HCT116 (cell line): ENCODE measurements at regions of chr22 and their contacts with region 1.

Region 1: GRCh38 chr22:24525416-24526037 is 29.4 kb downstream of the GUCD1 start:
- DNase-seq: peak; percentile 54
- ATAC-seq: peak; percentile 71
- H3K4me3 ChIP-seq: no peak overlapping the region
- H3K27ac ChIP-seq: no peak overlapping the region
- H3K4me1 ChIP-seq: peaks cover 11 to 14% of the 10 kb centered on the region in 2 experiments
- H3K27me3 ChIP-seq: no peaks in the 10 kb centered on the region
- CTCF ChIP-seq: peak; percentile 58 to 94 (median 85); a peak in 5 of 6 replicates
- POLR2A ChIP-seq: no peak
- RAD21 ChIP-seq: peak; percentile 78

Region 2: DNA sequence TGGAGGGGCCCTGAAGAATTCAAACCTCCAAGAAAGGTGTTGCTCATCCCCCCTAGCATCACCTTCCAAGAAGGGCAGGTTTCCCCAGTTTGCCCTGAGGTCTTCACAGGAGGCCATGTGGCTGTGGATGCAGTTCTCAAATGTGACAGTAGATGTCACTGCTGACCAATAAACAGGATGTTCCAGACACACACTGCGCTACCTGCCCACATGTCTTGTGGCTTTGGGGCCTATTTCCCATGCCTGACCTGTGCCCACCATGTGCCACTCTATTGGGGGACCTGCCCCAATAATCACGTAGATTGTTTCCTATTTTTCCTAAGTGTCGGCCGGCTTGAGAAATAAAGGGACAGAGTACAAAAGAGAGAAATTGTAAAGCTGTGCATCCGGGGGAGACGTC is 541.1 kb before region 1 on chr22:
- CTCF ChIA-PET with region 1: no interaction called
- POLR2A ChIA-PET with region 1: no interaction called
- RAD21 ChIA-PET with region 1: no interaction called
- intact Hi-C with region 1: loop called (anchors 10 kb)
- DNase-seq: peak; percentile 48
- ATAC-seq: peak; percentile 66
- H3K4me3 ChIP-seq: no peak overlapping the region
- H3K27ac ChIP-seq: no peak overlapping the region
- H3K4me1 ChIP-seq: no peaks in the 10 kb centered on the region
- H3K27me3 ChIP-seq: no peaks in the 10 kb centered on the region
- CTCF ChIP-seq: peak; percentile 75 to 81 (median 76)
- POLR2A ChIP-seq: no peak
- RAD21 ChIP-seq: peak; percentile 89

Region 3: GRCh38 chr22:24189249-24190158 is 336.0 kb before region 1 on chr22:
- CTCF ChIA-PET with region 1: interaction called, 8 read pairs
- POLR2A ChIA-PET with region 1: no interaction called
- RAD21 ChIA-PET with region 1: no interaction called
- intact Hi-C with region 1: loop called (anchors 10 kb)
- DNase-seq: no peak
- ATAC-seq: peak; percentile 93
- H3K4me3 ChIP-seq: no peak overlapping the region
- H3K27ac ChIP-seq: peak overlapping the region; percentile 74
- H3K4me1 ChIP-seq: peaks cover 35 to 36% of the 10 kb centered on the region in 2 experiments
- H3K27me3 ChIP-seq: no peaks in the 10 kb centered on the region
- CTCF ChIP-seq: peak; percentile 90 to 96 (median 94)
- POLR2A ChIP-seq: no peak
- RAD21 ChIP-seq: peak; percentile 100

Region 4: DNA sequence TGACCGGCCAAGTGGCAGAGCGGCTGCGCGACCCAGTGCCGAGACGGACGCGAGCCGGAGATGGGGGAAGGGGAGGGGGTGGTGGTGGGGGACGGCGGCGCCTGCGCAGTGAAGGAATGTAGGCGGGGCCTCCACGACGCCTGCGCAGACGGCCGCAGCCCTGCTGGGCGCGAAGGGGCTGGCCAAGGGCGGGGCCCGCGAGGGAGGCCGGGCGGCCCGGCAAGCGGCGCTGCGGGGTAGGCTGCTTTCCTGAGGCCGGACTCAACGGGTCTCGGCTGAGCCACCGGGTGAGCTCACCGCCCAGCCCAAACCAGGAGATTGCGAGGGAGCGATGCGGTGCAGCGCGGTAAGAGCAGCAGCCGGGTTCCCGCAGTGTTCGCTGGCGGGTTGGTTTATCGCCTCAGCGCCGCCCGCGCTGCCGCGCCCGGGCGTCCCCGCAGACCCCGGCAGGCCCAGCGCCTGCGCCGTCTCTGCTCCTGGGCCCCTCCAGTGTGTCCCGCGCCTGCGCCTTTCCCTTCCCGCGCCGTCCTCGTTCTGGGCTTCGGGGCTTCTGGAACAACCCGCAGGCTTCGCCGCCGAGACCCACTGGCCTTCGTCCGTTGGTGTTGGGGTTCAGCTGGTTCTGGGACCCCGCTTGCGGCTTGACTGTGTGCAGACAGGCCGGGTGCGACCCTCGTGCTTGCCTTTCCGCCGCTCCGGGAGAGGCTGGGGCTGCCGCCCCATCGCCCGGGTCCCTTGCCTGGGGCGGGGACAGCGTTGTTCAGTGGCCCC is 254.7 kb before region 1 on chr22 and contains the start of gene SPECC1L:
- CTCF ChIA-PET with region 1: no interaction called
- POLR2A ChIA-PET with region 1: no interaction called
- RAD21 ChIA-PET with region 1: no interaction called
- intact Hi-C with region 1: loop called (anchors 5 kb)
- DNase-seq: peak; percentile 84
- ATAC-seq: peak; percentile 92
- H3K4me3 ChIP-seq: peak within 1 kb of the TSS; percentile 93 to 97
- H3K27ac ChIP-seq: peak within 1 kb of the TSS; percentile 87
- H3K4me1 ChIP-seq: peaks cover 19 to 31% of the 10 kb centered on the region in 2 experiments
- H3K27me3 ChIP-seq: no peaks in the 10 kb centered on the region
- CTCF ChIP-seq: no peak
- POLR2A ChIP-seq: peak; percentile 96
- RAD21 ChIP-seq: no peak
- total RNA-seq, gene SPECC1L: 40.8 TPM

Region 5: GRCh38 chr22:24325105-24325757 is 200.3 kb before region 1 on chr22:
- CTCF ChIA-PET with region 1: interaction called, 5 read pairs
- POLR2A ChIA-PET with region 1: no interaction called
- RAD21 ChIA-PET with region 1: no interaction called
- intact Hi-C with region 1: loop called (anchors 1 kb)
- DNase-seq: no peak
- ATAC-seq: peak; percentile 65
- H3K4me3 ChIP-seq: no peak overlapping the region
- H3K27ac ChIP-seq: no peak overlapping the region
- H3K4me1 ChIP-seq: no peaks in the 10 kb centered on the region
- H3K27me3 ChIP-seq: no peaks in the 10 kb centered on the region
- CTCF ChIP-seq: peak; percentile 43 to 58 (median 44); a peak in 5 of 6 replicates
- POLR2A ChIP-seq: no peak
- RAD21 ChIP-seq: peak; percentile 60

Region 6: GRCh38 chr22:24423519-24424000 is 102.0 kb before region 1 on chr22:
- CTCF ChIA-PET with region 1: interaction called, 30 read pairs
- POLR2A ChIA-PET with region 1: no interaction called
- RAD21 ChIA-PET with region 1: no interaction called
- intact Hi-C with region 1: loop called (anchors 2 kb)
- DNase-seq: no peak
- ATAC-seq: peak; percentile 85
- H3K4me3 ChIP-seq: peak overlapping the region; percentile 40 to 59
- H3K27ac ChIP-seq: no peak overlapping the region
- H3K4me1 ChIP-seq: peaks cover 0 to 4% of the 10 kb centered on the region in 2 experiments; a peak in 2 of 4 replicates
- H3K27me3 ChIP-seq: no peaks in the 10 kb centered on the region
- CTCF ChIP-seq: peak; percentile 30 to 71 (median 62); a peak in 5 of 6 replicates
- POLR2A ChIP-seq: no peak
- RAD21 ChIP-seq: no peak; the same call in none of the 2 replicates

Region 7: DNA sequence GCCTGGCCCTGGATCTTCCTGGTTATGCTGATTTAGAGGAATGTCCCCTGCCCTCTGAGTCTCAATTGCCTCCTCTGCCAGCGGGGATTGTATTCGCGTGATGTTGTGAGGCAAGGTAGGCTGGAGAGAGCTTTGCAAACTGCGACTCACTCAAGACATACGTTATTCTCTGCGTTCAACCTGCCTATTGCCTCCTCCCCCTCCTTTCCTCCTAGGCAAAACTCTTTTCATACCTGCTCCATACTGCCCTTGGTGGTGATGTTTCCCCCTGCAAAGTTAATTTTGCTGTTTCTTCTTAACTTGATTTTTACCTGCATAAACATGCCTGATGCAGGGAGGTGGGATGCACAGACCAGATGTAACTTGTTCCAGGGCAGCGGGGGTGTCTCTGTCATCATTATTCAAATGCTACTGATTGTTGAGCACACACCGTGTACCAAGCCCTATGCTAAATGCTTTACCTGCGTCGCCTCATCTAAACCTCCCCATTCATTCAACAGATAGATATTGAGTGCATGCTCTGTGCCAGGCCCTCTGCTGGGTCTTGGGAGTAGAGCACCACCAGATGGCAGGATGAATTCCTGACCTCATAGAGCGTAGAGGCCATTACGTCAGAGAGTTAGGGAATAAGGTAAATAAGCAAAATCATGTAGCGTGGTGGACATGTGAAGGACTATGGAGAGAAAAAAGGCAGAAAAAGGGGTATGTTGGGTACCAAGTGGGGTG is 309.5 kb after region 1 on chr22:
- CTCF ChIA-PET with region 1: no interaction called
- POLR2A ChIA-PET with region 1: no interaction called
- RAD21 ChIA-PET with region 1: no interaction called
- intact Hi-C with region 1: no loop called
- DNase-seq: peak; percentile 37
- ATAC-seq: peak; percentile 98
- H3K4me3 ChIP-seq: no peak overlapping the region
- H3K27ac ChIP-seq: no peak overlapping the region
- H3K4me1 ChIP-seq: no peaks in the 10 kb centered on the region
- H3K27me3 ChIP-seq: no peaks in the 10 kb centered on the region
- CTCF ChIP-seq: peak; percentile 38 to 64 (median 60); a peak in 5 of 6 replicates
- POLR2A ChIP-seq: no peak
- RAD21 ChIP-seq: peak; percentile 48